A673 (cell line): ENCODE measurements at regions of chr14 and their contacts with region 1.

Region 1: DNA sequence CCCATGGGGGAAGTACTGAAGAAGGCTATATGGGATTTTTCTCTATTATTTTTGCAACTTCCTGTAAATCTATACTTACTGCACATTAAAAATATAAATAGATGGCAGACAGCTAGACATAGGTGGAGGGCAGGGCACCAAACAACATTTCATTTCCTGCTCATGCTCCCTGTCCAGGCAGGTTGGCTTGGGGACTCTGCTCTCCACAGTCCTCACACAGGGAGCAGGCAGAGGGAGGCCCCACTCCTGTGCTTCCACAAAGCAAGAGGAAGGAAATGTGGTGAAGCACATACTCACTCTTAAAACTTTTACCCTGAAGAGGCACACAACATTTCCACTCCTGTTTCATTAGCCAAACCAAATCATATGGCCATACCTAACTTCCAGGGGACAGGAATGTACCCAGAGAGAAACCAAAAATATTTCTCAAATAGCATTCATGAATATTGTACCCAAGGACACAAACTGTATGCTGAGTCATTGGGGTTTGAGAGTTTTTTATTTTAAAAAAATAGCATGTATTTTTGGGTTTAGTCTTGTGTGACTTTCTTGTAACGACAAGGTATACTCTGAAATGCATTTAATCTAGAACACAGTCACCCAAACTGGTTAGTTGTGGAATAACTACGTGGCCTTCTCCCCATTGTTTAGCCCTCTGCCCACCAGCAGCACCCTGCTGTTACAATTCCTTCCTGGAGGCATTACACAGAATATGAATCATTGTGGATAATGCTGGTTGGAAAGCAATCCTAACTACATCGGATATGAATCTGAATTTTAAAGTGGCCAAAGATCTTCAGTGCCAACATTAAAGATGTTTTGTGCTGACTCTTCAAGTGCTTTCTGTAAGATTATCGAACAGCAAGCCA is 40.9 kb downstream of the RTN1 start:
- DNase-seq: peak; percentile 85
- H3K4me3 ChIP-seq: no peak overlapping the region
- H3K27ac ChIP-seq: peak overlapping the region; percentile 23
- H3K4me1 ChIP-seq: peaks cover 18% of the 10 kb centered on the region
- H3K27me3 ChIP-seq: no peaks in the 10 kb centered on the region
- CTCF ChIP-seq: no peak

Region 2: GRCh38 chr14:59870277-59871165 is 40.8 kb after region 1 on chr14 and contains the start of gene RTN1:
- CTCF ChIA-PET with region 1: no interaction called
- POLR2A ChIA-PET with region 1: no interaction called
- intact Hi-C with region 1: loop called (anchors 5 kb)
- DNase-seq: peak; percentile 74
- H3K4me3 ChIP-seq: peak within 1 kb of the TSS; percentile 61
- H3K27ac ChIP-seq: no peak within 1 kb of the TSS
- H3K4me1 ChIP-seq: peaks cover 6% of the 10 kb centered on the region
- H3K27me3 ChIP-seq: peaks cover 70% of the 10 kb centered on the region
- CTCF ChIP-seq: no peak
- total RNA-seq, gene RTN1: 3.0 and 4.0 TPM in 2 replicates

Region 3: GRCh38 chr14:59897761-59898383 is 68.2 kb after region 1 on chr14:
- CTCF ChIA-PET with region 1: no interaction called
- POLR2A ChIA-PET with region 1: no interaction called
- intact Hi-C with region 1: no loop called
- DNase-seq: peak; percentile 67
- H3K4me3 ChIP-seq: no peak overlapping the region
- H3K27ac ChIP-seq: no peak overlapping the region
- H3K4me1 ChIP-seq: no peaks in the 10 kb centered on the region
- H3K27me3 ChIP-seq: no peaks in the 10 kb centered on the region
- CTCF ChIP-seq: peak; percentile 63